GM12878 (cell line): ENCODE measurements at regions of chr5 and their contacts with region 1.

Region 1: GRCh38 chr5:56670118-56670483 is 145.2 kb upstream of the MAP3K1 start:
- DNase-seq: peak; percentile 98
- ATAC-seq: peak; percentile 97
- H3K4me3 ChIP-seq: no peak overlapping the region
- H3K27ac ChIP-seq: no peak overlapping the region
- H3K4me1 ChIP-seq: peaks cover 22% of the 10 kb centered on the region
- H3K27me3 ChIP-seq: no peaks in the 10 kb centered on the region
- CTCF ChIP-seq: no peak
- EP300 ChIP-seq: peak; percentile 92 to 96
- POLR2A ChIP-seq: no peak
- RAD21 ChIP-seq: no peak; the same call in 1 of the 2 replicates

Region 2: DNA sequence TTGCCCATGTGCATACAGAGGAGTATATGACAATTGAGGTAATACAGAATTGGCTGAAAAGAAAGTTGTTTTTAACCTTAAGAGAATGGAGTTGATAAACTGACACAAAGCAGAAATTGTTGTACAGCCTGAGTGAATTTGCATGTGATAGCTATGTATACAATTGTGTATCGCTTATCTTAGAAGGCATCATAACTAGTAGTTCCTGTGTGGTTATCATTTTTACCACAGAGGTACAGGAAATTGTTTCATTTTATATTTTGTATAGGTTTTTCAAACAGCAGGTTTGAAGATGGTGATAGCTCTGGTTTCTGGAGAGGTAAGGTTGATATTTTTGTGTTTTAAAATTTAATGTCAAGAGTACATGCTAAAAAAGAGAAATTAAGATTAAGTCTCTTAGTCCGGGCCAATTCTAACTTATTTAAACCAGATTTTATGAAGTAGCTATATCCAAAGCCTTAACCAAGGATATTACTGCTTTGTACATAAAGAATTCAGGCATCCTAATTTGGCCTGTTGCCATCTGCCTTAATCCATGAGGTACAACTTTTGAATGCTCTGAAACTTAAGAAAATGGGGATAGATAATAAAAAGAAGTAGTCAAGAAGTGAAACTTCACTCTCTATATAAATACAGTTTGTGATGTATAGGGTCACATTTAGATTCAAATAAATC is 906.2 kb before region 1 on chr5:
- CTCF ChIA-PET with region 1: no interaction called
- POLR2A ChIA-PET with region 1: no interaction called
- RAD21 ChIA-PET with region 1: no interaction called
- SMC1A ChIA-PET with region 1: no interaction called
- in situ Hi-C with region 1: no loop called
- intact Hi-C with region 1: no loop called
- DNase-seq: no peak
- ATAC-seq: peak; percentile 90
- H3K4me3 ChIP-seq: no peak overlapping the region
- H3K27ac ChIP-seq: no peak overlapping the region
- H3K4me1 ChIP-seq: peaks cover 4% of the 10 kb centered on the region; the same call in 1 of the 2 replicates
- H3K27me3 ChIP-seq: no peaks in the 10 kb centered on the region
- CTCF ChIP-seq: no peak
- EP300 ChIP-seq: no peak
- POLR2A ChIP-seq: no peak
- RAD21 ChIP-seq: no peak

Region 3: DNA sequence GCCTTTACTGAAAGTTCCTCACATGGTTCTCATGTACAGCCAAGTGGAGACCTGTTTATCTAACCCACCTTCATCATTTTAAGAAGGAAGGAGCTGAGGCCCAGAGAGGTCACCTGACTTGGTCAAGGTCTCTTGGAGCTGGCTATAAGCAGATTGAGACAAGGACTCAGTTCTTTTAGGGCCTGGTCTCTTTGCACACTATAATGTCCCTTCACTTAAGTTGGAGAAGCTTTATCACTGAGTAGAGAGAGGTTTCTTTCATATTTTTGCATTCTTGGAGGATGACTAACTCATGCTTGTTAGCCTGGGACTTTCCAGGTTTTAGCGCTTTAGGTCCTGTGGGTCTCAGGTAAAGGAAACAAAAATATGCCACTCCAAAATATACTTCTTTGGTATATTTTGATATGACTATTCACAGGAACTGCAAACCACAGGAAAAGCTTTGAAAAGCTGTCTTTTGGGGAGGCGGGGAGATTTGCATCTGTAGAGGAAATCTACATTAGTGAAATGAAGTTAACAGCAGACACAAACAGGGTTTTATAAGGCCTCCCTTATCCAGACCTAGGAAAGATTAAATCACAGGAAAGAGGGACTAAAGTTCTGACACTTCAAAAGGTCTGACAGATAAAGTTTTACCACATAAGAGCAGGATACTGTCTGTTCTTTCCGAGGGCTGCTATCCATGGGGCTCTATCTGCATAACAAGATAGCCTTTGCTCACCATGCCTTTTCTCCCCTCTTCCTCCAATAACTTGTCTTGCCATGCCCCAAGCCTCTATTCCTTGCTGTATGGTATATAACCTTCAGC is 341.1 kb before region 1 on chr5:
- CTCF ChIA-PET with region 1: interaction called, 5 read pairs
- POLR2A ChIA-PET with region 1: no interaction called
- RAD21 ChIA-PET with region 1: interaction called, 10 read pairs
- SMC1A ChIA-PET with region 1: interaction called, 15 read pairs
- in situ Hi-C with region 1: no loop called
- intact Hi-C with region 1: no loop called
- DNase-seq: peak; percentile 78
- ATAC-seq: peak; percentile 82
- H3K4me3 ChIP-seq: peak overlapping the region; percentile 14; the same call in 1 of the 2 replicates
- H3K27ac ChIP-seq: peak overlapping the region; percentile 59
- H3K4me1 ChIP-seq: peaks cover 21% of the 10 kb centered on the region
- H3K27me3 ChIP-seq: no peaks in the 10 kb centered on the region
- CTCF ChIP-seq: no peak
- EP300 ChIP-seq: peak in 1 of 2 experiments; percentile 70; a peak in 1 of 4 replicates
- POLR2A ChIP-seq: no peak
- RAD21 ChIP-seq: no peak

Region 4: GRCh38 chr5:56415356-56415765 is 254.7 kb before region 1 on chr5:
- CTCF ChIA-PET with region 1: interaction called, 6 read pairs
- POLR2A ChIA-PET with region 1: interaction called, 6 read pairs
- RAD21 ChIA-PET with region 1: interaction called, 39 read pairs
- SMC1A ChIA-PET with region 1: interaction called, 36 read pairs
- in situ Hi-C with region 1: no loop called
- intact Hi-C with region 1: no loop called
- DNase-seq: peak; percentile 92
- ATAC-seq: peak; percentile 84
- H3K4me3 ChIP-seq: peak overlapping the region; percentile 48; the same call in 1 of the 2 replicates
- H3K27ac ChIP-seq: peak overlapping the region; percentile 79
- H3K4me1 ChIP-seq: peaks cover 40% of the 10 kb centered on the region
- H3K27me3 ChIP-seq: no peaks in the 10 kb centered on the region
- CTCF ChIP-seq: no peak
- EP300 ChIP-seq: peak in 1 of 2 experiments; percentile 39; a peak in 2 of 4 replicates
- POLR2A ChIP-seq: 0 out of 2 replicates have a peak, but pooled peaks have one; percentile 26
- RAD21 ChIP-seq: 0 out of 2 replicates have a peak, but pooled peaks have one; percentile 10

Region 5: DNA sequence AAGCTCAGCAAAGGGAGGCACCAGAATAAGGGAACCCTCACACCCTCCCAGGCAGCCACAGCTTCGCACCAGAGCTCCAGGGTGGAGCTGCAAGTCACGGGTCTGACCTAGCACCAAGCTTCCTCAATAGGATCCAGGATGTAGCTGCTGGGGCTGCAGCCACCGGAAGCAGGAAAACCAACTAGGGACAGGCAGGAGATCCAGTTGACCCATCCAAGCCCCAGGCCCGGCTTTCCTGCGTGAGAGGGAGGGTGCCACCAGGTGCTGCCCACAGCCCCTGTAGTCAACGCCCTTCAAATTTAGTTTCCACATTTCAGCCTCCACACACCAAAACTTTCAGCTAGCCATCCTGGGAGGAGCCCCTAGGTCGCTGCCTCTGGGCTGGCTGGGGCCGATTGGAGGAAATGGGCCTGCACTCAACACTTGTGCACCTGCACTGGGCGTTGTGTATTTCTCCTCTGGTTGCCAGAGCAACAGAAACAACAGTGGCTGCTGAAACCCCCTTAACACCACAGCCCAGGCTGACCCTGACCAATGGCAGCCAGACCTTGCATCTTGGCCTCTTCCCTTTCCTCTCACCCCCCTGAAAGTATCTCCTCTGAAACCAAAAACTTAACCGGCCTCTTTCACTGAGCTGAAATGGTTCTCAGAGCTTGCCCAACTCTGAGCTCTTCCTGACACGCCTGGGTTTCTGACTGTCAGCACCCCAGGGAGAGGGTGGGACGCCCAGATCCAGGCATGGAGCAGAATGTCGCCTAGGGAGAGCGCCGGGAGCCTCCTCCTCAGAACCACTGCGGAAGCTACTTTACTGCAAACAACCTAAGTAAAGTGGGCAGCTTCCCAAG is 81.2 kb before region 1 on chr5:
- CTCF ChIA-PET with region 1: interaction called, 5 read pairs
- POLR2A ChIA-PET with region 1: interaction called, 4 read pairs
- RAD21 ChIA-PET with region 1: interaction called, 28 read pairs
- SMC1A ChIA-PET with region 1: no interaction called
- in situ Hi-C with region 1: no loop called
- intact Hi-C with region 1: loop called (anchors 5 kb)
- DNase-seq: peak; percentile 78
- ATAC-seq: peak; percentile 99
- H3K4me3 ChIP-seq: peak overlapping the region; percentile 38; the same call in 1 of the 2 replicates
- H3K27ac ChIP-seq: peak overlapping the region; percentile 82
- H3K4me1 ChIP-seq: peaks cover 22% of the 10 kb centered on the region
- H3K27me3 ChIP-seq: no peaks in the 10 kb centered on the region
- CTCF ChIP-seq: no peak
- EP300 ChIP-seq: peak; percentile 73 to 96
- POLR2A ChIP-seq: peak; percentile 69
- RAD21 ChIP-seq: peak; percentile 17; the same call in 1 of the 2 replicates

Region 6: GRCh38 chr5:56658974-56659373 is 11.1 kb before region 1 on chr5:
- CTCF ChIA-PET with region 1: interaction called, 5 read pairs
- POLR2A ChIA-PET with region 1: interaction called, 4 read pairs
- RAD21 ChIA-PET with region 1: interaction called, 5 read pairs
- SMC1A ChIA-PET with region 1: interaction called, 26 read pairs
- in situ Hi-C with region 1: no loop called
- intact Hi-C with region 1: no loop called
- DNase-seq: no peak
- ATAC-seq: peak; percentile 94
- H3K4me3 ChIP-seq: no peak overlapping the region
- H3K27ac ChIP-seq: no peak overlapping the region
- H3K4me1 ChIP-seq: peaks cover 12% of the 10 kb centered on the region
- H3K27me3 ChIP-seq: peaks cover 0 to 13% of the 10 kb centered on the region in 2 experiments; a peak in 1 of 4 replicates
- CTCF ChIP-seq: no peak
- EP300 ChIP-seq: peak in 1 of 2 experiments; percentile 25; a peak in 1 of 4 replicates
- POLR2A ChIP-seq: no peak
- RAD21 ChIP-seq: no peak

Region 7: GRCh38 chr5:56686337-56687195 is 16.5 kb after region 1 on chr5:
- CTCF ChIA-PET with region 1: interaction called, 20 read pairs
- POLR2A ChIA-PET with region 1: interaction called, 34 read pairs
- RAD21 ChIA-PET with region 1: interaction called, 96 read pairs
- SMC1A ChIA-PET with region 1: interaction called, 84 read pairs
- in situ Hi-C with region 1: no loop called
- intact Hi-C with region 1: loop called (anchors 1 kb)
- DNase-seq: peak; percentile 46
- ATAC-seq: peak; percentile 87
- H3K4me3 ChIP-seq: peak overlapping the region; percentile 35; the same call in 1 of the 2 replicates
- H3K27ac ChIP-seq: peak overlapping the region; percentile 68
- H3K4me1 ChIP-seq: peaks cover 24% of the 10 kb centered on the region
- H3K27me3 ChIP-seq: no peaks in the 10 kb centered on the region
- CTCF ChIP-seq: no peak
- EP300 ChIP-seq: peak; percentile 76 to 92
- POLR2A ChIP-seq: no peak
- RAD21 ChIP-seq: no peak

Region 8: GRCh38 chr5:56698463-56699381 is 28.6 kb after region 1 on chr5:
- CTCF ChIA-PET with region 1: interaction called, 4 read pairs
- POLR2A ChIA-PET with region 1: no interaction called
- RAD21 ChIA-PET with region 1: interaction called, 7 read pairs
- SMC1A ChIA-PET with region 1: interaction called, 12 read pairs
- in situ Hi-C with region 1: no loop called
- intact Hi-C with region 1: no loop called
- DNase-seq: no peak
- ATAC-seq: peak; percentile 48
- H3K4me3 ChIP-seq: no peak overlapping the region
- H3K27ac ChIP-seq: no peak overlapping the region
- H3K4me1 ChIP-seq: no peaks in the 10 kb centered on the region
- H3K27me3 ChIP-seq: peaks cover 0 to 13% of the 10 kb centered on the region in 2 experiments; a peak in 2 of 4 replicates
- CTCF ChIP-seq: no peak
- EP300 ChIP-seq: no peak
- POLR2A ChIP-seq: no peak
- RAD21 ChIP-seq: no peak

Region 9: GRCh38 chr5:57082441-57083067 is 412.5 kb after region 1 on chr5:
- CTCF ChIA-PET with region 1: no interaction called
- POLR2A ChIA-PET with region 1: no interaction called
- RAD21 ChIA-PET with region 1: no interaction called
- SMC1A ChIA-PET with region 1: no interaction called
- in situ Hi-C with region 1: no loop called
- intact Hi-C with region 1: no loop called
- DNase-seq: no peak
- ATAC-seq: no peak
- H3K4me3 ChIP-seq: no peak overlapping the region
- H3K27ac ChIP-seq: no peak overlapping the region
- H3K4me1 ChIP-seq: no peaks in the 10 kb centered on the region
- H3K27me3 ChIP-seq: no peaks in the 10 kb centered on the region
- CTCF ChIP-seq: peak in 1 of 3 experiments; percentile 8; a peak in 1 of 6 replicates
- EP300 ChIP-seq: no peak
- POLR2A ChIP-seq: no peak
- RAD21 ChIP-seq: 0 out of 2 replicates have a peak, but pooled peaks have one; percentile 5